ENCODE measurements at regions of chr10 and their contacts with region 1.

Region 1: DNA sequence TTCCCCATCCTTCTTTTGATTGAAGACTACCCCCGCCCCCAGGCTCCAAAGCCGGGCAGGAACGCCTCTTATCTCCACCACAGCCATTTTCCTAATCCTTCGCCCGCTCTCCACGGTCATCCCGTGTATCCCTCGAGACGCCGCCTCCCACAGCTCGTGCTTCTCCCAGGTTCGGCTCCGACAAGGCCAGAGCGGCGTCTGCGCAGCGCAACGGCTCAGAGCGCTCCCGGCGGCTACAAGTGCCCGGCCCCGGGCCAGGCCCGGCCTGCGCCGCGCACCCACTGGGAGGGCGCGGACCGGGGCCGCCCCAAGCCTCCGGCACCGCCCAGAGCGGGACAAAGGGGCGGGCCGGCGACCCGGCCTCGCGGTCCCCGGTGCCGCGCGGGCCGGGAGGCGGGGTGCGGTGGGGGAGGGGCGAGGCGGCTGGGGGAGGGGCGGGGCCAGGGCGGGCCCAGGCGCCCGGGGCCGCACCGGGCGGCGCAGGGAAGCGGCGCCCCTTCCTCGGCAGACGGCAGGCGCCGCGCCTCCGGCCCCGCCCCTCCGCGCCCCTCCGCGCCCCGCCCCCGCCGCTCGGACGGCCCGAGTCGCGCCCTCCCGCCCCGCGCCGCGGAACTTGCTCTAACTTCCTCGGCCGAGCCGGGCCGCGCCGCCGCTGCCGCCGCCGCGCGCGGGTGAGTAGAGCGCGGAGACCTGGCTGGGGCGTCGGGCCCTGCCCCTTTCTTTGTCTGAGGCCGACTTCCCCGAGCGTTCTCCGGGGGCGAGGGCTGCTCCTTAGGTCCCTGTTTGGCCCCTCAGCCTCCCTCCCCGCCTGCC is at the start of gene TSPAN14:
- DNase-seq: peak; percentile 81
- H3K4me3 ChIP-seq: peak within 1 kb of the TSS; percentile 97 to 98
- H3K27ac ChIP-seq: peak within 1 kb of the TSS; percentile 98 to 99
- H3K4me1 ChIP-seq: peaks cover 11% of the 10 kb centered on the region
- H3K27me3 ChIP-seq: no peaks in the 10 kb centered on the region
- CTCF ChIP-seq: peak in 1 of 4 experiments; percentile 11
- POLR2A ChIP-seq: peak; percentile 83
- total RNA-seq, gene TSPAN14: 69.8 to 103 TPM

Region 2: GRCh38 chr10:80333983-80334382 is 119.9 kb before region 1 on chr10:
- intact Hi-C with region 1: no loop called
- DNase-seq: no peak
- H3K4me3 ChIP-seq: no peak overlapping the region
- H3K27ac ChIP-seq: no peak overlapping the region
- H3K4me1 ChIP-seq: no peaks in the 10 kb centered on the region
- H3K27me3 ChIP-seq: no peaks in the 10 kb centered on the region
- CTCF ChIP-seq: no peak
- POLR2A ChIP-seq: no peak

Region 3: DNA sequence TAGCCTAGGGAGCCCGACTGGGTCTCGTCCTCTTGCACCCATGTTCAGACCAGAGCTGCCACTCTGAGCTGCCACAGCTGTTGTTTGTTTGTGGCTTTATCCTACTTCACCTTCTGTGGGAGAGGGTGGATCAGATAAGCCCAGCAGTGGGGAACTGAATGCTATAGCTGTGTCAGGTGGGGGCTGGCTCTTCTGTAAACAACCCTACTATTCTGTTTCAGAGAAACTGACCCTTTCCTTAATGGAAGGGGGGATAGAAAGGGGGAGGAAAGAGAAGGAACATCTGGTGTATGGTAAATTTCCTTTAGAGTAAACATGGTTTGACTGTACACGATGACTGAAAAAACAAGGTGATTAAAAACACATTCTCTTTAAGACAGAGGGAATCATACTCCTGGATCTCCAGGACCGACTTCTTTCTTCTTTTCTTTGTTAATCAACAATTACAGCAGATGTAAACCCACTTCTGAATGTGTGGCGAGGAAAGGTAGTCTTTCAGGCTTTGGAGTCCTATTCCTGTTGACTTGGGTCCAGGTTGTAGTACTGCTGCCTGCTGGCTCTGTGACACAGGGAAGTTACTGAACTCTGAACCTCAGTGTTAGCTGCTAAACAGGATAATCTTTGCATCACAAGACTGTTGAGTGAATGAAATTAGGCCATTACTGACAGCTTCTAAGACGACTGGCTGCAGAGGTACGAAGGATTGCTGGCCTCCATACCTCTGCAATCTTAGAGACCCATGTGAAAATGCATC is 39.6 kb before region 1 on chr10:
- intact Hi-C with region 1: loop called (anchors 1 kb)
- DNase-seq: no peak
- H3K4me3 ChIP-seq: peak overlapping the region in 1 of 2 donors; percentile 3
- H3K27ac ChIP-seq: peak overlapping the region; percentile 74 to 85
- H3K4me1 ChIP-seq: peaks cover 37% of the 10 kb centered on the region
- H3K27me3 ChIP-seq: no peaks in the 10 kb centered on the region
- CTCF ChIP-seq: no peak
- POLR2A ChIP-seq: no peak

Region 4: GRCh38 chr10:80498833-80499741 is 45.2 kb after region 1 on chr10:
- intact Hi-C with region 1: loop called (anchors 2 kb)
- DNase-seq: peak; percentile 87
- H3K4me3 ChIP-seq: no peak overlapping the region
- H3K27ac ChIP-seq: peak overlapping the region; percentile 63 to 77
- H3K4me1 ChIP-seq: peaks cover 18% of the 10 kb centered on the region
- H3K27me3 ChIP-seq: no peaks in the 10 kb centered on the region
- CTCF ChIP-seq: peak in 1 of 4 experiments; percentile 11
- POLR2A ChIP-seq: no peak